CD4-positive, alpha-beta memory T cell (primary cell): ENCODE measurements at regions of chr5 and their contacts with region 1.

Region 1: DNA sequence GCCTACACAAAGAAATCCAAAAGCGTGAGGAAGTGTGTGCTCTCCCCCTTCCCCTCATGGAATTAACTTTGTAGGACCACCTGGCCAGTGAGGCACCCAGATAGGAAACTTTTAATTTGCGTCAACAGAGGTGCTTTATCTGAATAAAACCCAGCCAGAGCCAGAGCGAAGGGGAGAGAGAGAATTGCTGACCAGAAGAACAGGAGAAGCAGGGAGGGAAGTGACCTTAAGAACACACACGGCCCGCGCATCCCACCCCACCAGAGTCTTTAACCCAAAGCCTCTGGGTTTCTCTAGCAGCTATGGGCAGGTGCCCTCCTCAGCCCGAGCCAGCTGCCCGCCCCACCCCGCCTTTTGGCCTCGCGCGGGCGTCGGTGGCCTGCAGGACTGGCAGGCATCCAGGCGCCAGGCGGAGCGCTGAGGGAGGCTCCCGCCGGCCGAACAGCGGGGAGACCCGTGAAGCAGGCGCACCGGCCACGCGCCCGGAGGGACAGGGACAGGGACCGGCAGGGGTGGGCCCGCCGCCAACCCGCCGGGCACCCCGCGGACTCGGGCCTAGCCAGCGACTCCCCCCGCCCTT is 580 bp downstream of the ERAP1 start:
- DNase-seq: no peak
- H3K4me3 ChIP-seq: peak overlapping the region; percentile 48 to 68
- H3K4me3 Mint-ChIP-seq: peak overlapping the region; percentile 92 to 100 (median 98)
- H3K27ac ChIP-seq: peak overlapping the region; percentile 86
- H3K27ac Mint-ChIP-seq: peak overlapping the region; percentile 95 to 100 (median 99)
- H3K4me1 ChIP-seq: peaks cover 63% of the 10 kb centered on the region
- H3K4me1 Mint-ChIP-seq: peaks cover 44 to 79% (median 64%) of the 10 kb centered on the region in 4 donors
- H3K27me3 ChIP-seq: no peaks in the 10 kb centered on the region
- H3K27me3 Mint-ChIP-seq: peaks cover 0 to 3% of the 10 kb centered on the region in 2 donors

Region 2: DNA sequence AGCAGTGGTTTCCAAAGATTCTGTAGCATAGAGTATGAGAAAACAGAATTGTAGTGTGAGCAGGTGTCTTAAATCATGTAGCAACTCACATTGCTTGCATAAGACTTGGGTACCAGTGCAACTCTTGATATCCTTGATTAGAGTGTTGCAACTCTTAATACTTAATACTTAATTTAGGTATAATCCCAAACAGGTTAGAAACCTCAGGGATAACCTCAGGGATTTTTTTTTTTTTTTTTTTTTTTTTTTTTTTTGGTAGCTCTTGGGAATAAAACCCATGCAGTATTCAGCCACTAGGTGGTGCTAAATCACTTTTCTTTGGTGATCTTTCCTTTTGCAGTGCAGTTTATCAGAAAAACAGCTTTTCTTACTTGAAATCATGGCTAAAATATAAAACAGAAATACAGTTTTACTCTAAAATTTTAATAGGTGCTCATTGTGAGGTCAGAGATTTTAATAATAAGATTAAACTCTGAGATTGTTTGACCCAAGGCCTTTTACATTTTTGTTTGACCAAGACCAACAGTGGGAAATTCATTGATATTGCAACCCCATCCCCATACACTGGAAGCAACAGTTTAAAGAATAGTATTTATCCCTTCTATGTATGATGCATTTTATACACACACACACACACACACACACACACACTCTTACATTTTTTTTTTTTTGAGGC is 54.7 kb before region 1 on chr5:
- CTCF ChIA-PET with region 1: interaction called, 12 read pairs
- POLR2A ChIA-PET with region 1: interaction called, 7 read pairs
- intact Hi-C with region 1: no loop called
- DNase-seq: peak; percentile 44 to 66 (median 62)
- H3K4me3 ChIP-seq: no peak overlapping the region
- H3K4me3 Mint-ChIP-seq: no peak overlapping the region
- H3K27ac ChIP-seq: no peak overlapping the region
- H3K27ac Mint-ChIP-seq: peak overlapping the region in 3 of 7 donors; percentile 10 to 84 (median 50)
- H3K4me1 ChIP-seq: no peaks in the 10 kb centered on the region
- H3K4me1 Mint-ChIP-seq: peaks cover 0 to 3% (median under 1%) of the 10 kb centered on the region in 4 donors
- H3K27me3 ChIP-seq: no peaks in the 10 kb centered on the region
- H3K27me3 Mint-ChIP-seq: no peaks in the 10 kb centered on the region

Region 3: DNA sequence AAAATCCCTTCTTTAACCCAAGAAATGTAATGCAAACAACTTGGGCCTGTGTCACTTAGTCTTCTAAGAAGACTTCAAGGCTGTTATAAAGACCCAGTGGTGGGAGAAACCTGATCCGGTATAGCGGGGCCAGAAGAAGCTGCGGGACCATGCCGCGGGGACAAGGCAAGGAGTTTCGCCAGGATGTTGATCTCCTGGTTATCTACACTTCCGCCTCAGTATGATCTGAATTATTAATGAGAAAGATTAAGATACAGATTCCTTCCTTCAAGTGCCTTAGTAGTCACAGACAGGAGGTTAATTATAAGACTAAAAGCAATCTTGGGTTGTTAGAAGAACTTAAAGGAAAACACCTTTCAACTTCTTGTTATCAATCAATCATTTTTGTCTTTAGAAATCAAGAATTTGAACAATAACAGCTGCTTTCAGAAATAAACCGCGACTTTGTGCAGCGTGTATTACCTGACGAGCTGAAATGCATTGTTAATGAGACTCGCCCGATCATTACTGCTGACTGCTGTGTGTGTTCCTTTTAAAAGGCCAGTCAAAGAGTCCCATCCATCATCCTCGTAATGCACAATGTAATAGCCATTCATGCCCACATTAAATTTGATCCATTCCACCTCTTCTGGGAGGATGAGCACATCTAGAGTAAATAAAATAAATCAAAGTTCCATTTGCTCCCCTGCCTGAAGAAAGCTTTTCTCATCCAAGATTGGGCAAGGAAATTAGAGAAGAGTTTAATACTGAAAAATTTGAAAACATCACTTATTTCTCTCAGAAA is 21.6 kb before region 1 on chr5:
- CTCF ChIA-PET with region 1: interaction called, 5 read pairs
- POLR2A ChIA-PET with region 1: interaction called, 18 read pairs
- intact Hi-C with region 1: no loop called
- DNase-seq: no peak
- H3K4me3 ChIP-seq: no peak overlapping the region
- H3K4me3 Mint-ChIP-seq: no peak overlapping the region
- H3K27ac ChIP-seq: no peak overlapping the region
- H3K27ac Mint-ChIP-seq: peak overlapping the region; percentile 20 to 78 (median 72)
- H3K4me1 ChIP-seq: no peaks in the 10 kb centered on the region
- H3K4me1 Mint-ChIP-seq: peaks cover 5 to 12% (median 6%) of the 10 kb centered on the region in 4 donors
- H3K27me3 ChIP-seq: no peaks in the 10 kb centered on the region
- H3K27me3 Mint-ChIP-seq: no peaks in the 10 kb centered on the region

Region 4: GRCh38 chr5:96876292-96876850 is 69.2 kb after region 1 on chr5 and contains the start of gene ERAP2:
- CTCF ChIA-PET with region 1: interaction called, 7 read pairs
- POLR2A ChIA-PET with region 1: interaction called, 47 read pairs
- intact Hi-C with region 1: loop called (anchors 1 kb)
- DNase-seq: peak; percentile 49 to 69 (median 65)
- H3K4me3 ChIP-seq: peak within 1 kb of the TSS; percentile 79 to 92
- H3K4me3 Mint-ChIP-seq: peak within 1 kb of the TSS; percentile 90 to 99 (median 96)
- H3K27ac ChIP-seq: peak within 1 kb of the TSS; percentile 79
- H3K27ac Mint-ChIP-seq: peak within 1 kb of the TSS; percentile 89 to 99 (median 97)
- H3K4me1 ChIP-seq: peaks cover 61% of the 10 kb centered on the region
- H3K4me1 Mint-ChIP-seq: peaks cover 45 to 80% (median 49%) of the 10 kb centered on the region in 4 donors
- H3K27me3 ChIP-seq: no peaks in the 10 kb centered on the region
- H3K27me3 Mint-ChIP-seq: no peaks in the 10 kb centered on the region
- total RNA-seq, gene ERAP2: 107 to 112 TPM

Region 5: GRCh38 chr5:96963267-96963666 is 156.1 kb after region 1 on chr5:
- CTCF ChIA-PET with region 1: no interaction called
- POLR2A ChIA-PET with region 1: interaction called, 12 read pairs
- intact Hi-C with region 1: no loop called
- DNase-seq: peak in 2 of 5 donors; percentile 19 to 44
- H3K4me3 ChIP-seq: peak overlapping the region in 1 of 2 donors; percentile 29
- H3K4me3 Mint-ChIP-seq: peak overlapping the region; percentile 33 to 89 (median 80)
- H3K27ac ChIP-seq: peak overlapping the region; percentile 45
- H3K27ac Mint-ChIP-seq: peak overlapping the region; percentile 83 to 97 (median 95)
- H3K4me1 ChIP-seq: peaks cover 88% of the 10 kb centered on the region
- H3K4me1 Mint-ChIP-seq: peaks cover 53 to 89% (median 71%) of the 10 kb centered on the region in 4 donors
- H3K27me3 ChIP-seq: no peaks in the 10 kb centered on the region
- H3K27me3 Mint-ChIP-seq: no peaks in the 10 kb centered on the region

Region 6: GRCh38 chr5:97101189-97101910 is 294.2 kb after region 1 on chr5:
- CTCF ChIA-PET with region 1: no interaction called
- POLR2A ChIA-PET with region 1: no interaction called
- intact Hi-C with region 1: no loop called
- DNase-seq: no peak
- H3K4me3 ChIP-seq: no peak overlapping the region
- H3K4me3 Mint-ChIP-seq: no peak overlapping the region
- H3K27ac ChIP-seq: no peak overlapping the region
- H3K27ac Mint-ChIP-seq: no peak overlapping the region
- H3K4me1 ChIP-seq: no peaks in the 10 kb centered on the region
- H3K4me1 Mint-ChIP-seq: no peaks in the 10 kb centered on the region
- H3K27me3 ChIP-seq: no peaks in the 10 kb centered on the region
- H3K27me3 Mint-ChIP-seq: peaks cover 5 to 7% of the 10 kb centered on the region in 2 donors